ENCODE measurements at regions of chr1 and their contacts with region 1.

Region 1: GRCh38 chr1:9292361-9293240 is at the start of gene SPSB1:
- DNase-seq: peak; percentile 52
- ATAC-seq: peak; percentile 66
- H3K4me3 Mint-ChIP-seq: peak within 1 kb of the TSS; percentile 67
- H3K27ac Mint-ChIP-seq: no peak within 1 kb of the TSS
- H3K4me1 Mint-ChIP-seq: peaks cover 6% of the 10 kb centered on the region
- H3K27me3 Mint-ChIP-seq: no peaks in the 10 kb centered on the region
- CTCF ChIP-seq: no peak
- total RNA-seq, gene SPSB1: 5.8 and 6.1 TPM in 2 replicates

Region 2: GRCh38 chr1:8314346-8315280 is 978.0 kb before region 1 on chr1:
- CTCF ChIA-PET with region 1: no interaction called
- POLR2A ChIA-PET with region 1: no interaction called
- intact Hi-C with region 1: no loop called
- DNase-seq: no peak
- ATAC-seq: no peak
- H3K4me3 Mint-ChIP-seq: no peak overlapping the region
- H3K27ac Mint-ChIP-seq: no peak overlapping the region
- H3K4me1 Mint-ChIP-seq: peaks cover 14% of the 10 kb centered on the region
- H3K27me3 Mint-ChIP-seq: peaks cover 38% of the 10 kb centered on the region
- CTCF ChIP-seq: no peak

Region 3: GRCh38 chr1:9110669-9111356 is 181.8 kb before region 1 on chr1:
- CTCF ChIA-PET with region 1: interaction called, 10 read pairs
- POLR2A ChIA-PET with region 1: no interaction called
- intact Hi-C with region 1: no loop called
- DNase-seq: peak; percentile 79
- ATAC-seq: peak; percentile 93
- H3K4me3 Mint-ChIP-seq: no peak overlapping the region
- H3K27ac Mint-ChIP-seq: no peak overlapping the region
- H3K4me1 Mint-ChIP-seq: peaks cover 4% of the 10 kb centered on the region
- H3K27me3 Mint-ChIP-seq: no peaks in the 10 kb centered on the region
- CTCF ChIP-seq: peak; percentile 76

Region 4: GRCh38 chr1:9362488-9362887 is 69.9 kb after region 1 on chr1:
- CTCF ChIA-PET with region 1: interaction called, 3 read pairs
- POLR2A ChIA-PET with region 1: interaction called, 3 read pairs
- intact Hi-C with region 1: loop called (anchors 2 kb)
- DNase-seq: peak; percentile 25
- ATAC-seq: peak; percentile 68
- H3K4me3 Mint-ChIP-seq: peak overlapping the region; percentile 78
- H3K27ac Mint-ChIP-seq: no peak overlapping the region
- H3K4me1 Mint-ChIP-seq: peaks cover 22% of the 10 kb centered on the region
- H3K27me3 Mint-ChIP-seq: no peaks in the 10 kb centered on the region
- CTCF ChIP-seq: no peak

Region 5: GRCh38 chr1:9455487-9456234 is 163.1 kb after region 1 on chr1:
- CTCF ChIA-PET with region 1: interaction called, 200 read pairs
- POLR2A ChIA-PET with region 1: interaction called, 16 read pairs
- intact Hi-C with region 1: loop called (anchors 1 kb)
- DNase-seq: peak; percentile 57
- ATAC-seq: peak; percentile 79
- H3K4me3 Mint-ChIP-seq: no peak overlapping the region
- H3K27ac Mint-ChIP-seq: no peak overlapping the region
- H3K4me1 Mint-ChIP-seq: peaks cover 2% of the 10 kb centered on the region
- H3K27me3 Mint-ChIP-seq: peaks cover 3% of the 10 kb centered on the region
- CTCF ChIP-seq: no peak

Region 6: GRCh38 chr1:9573723-9574122 is 281.1 kb after region 1 on chr1:
- CTCF ChIA-PET with region 1: no interaction called
- POLR2A ChIA-PET with region 1: no interaction called
- intact Hi-C with region 1: loop called (anchors 10 kb)
- DNase-seq: no peak
- ATAC-seq: no peak
- H3K4me3 Mint-ChIP-seq: no peak overlapping the region
- H3K27ac Mint-ChIP-seq: no peak overlapping the region
- H3K4me1 Mint-ChIP-seq: peaks cover 5% of the 10 kb centered on the region
- H3K27me3 Mint-ChIP-seq: no peaks in the 10 kb centered on the region
- CTCF ChIP-seq: no peak

Region 7: DNA sequence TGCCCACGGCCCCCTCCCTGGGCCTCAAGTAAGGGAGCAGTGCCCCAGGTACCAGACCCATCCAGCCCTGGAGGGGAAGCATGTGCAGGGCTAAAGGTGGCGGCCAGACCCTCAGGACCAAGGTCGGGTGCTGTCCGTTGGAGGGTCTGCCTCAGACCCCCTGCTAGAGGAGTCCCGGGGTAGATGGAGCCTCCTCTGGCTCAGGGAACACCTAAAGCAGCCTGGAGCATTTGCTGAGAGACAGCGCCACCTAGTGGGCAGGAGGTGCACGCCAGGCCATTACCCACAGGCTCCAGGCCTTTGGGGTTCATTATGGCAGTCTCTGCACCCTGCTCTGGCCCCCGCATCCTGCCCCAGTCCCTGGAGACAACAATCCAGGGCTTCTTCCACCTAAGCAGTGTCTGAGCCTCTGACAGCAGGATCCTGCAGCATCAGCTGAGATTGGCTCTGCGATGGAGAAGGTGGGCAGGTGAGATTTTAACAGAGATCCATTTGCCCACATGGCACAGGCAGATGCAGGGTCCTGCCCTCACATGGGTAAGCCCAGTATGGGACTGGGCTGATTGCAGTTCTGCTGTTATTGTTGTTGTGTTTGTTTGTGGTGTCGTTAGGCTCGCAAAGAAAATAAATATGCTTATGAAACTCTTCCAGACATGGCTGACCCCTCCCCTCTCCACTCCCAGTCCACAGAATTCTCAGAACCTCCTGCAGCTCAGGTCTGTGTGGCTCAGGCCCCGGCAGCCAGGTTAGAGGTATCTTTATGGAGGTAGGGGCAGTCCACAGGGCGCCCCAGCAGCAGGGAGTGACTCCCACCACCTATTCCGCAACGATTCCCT is 575.0 kb after region 1 on chr1:
- CTCF ChIA-PET with region 1: no interaction called
- POLR2A ChIA-PET with region 1: no interaction called
- intact Hi-C with region 1: loop called (anchors 10 kb)
- DNase-seq: peak; percentile 79
- ATAC-seq: peak; percentile 97
- H3K4me3 Mint-ChIP-seq: no peak overlapping the region
- H3K27ac Mint-ChIP-seq: no peak overlapping the region
- H3K4me1 Mint-ChIP-seq: no peaks in the 10 kb centered on the region
- H3K27me3 Mint-ChIP-seq: no peaks in the 10 kb centered on the region
- CTCF ChIP-seq: peak; percentile 24

Measured in activated B cell treated with CpG ODN at 0.5 μM for 24 hours (primary cell).